Activated CD4-positive, alpha-beta T cell treated with anti-CD3 and anti-CD28 coated beads, Interleukin-2, amount 10 ng/mL, durations not matched to agents 24 days and 14 days (primary cell): ENCODE measurements at regions of chr1 and their contacts with region 1.

Region 1: GRCh38 chr1:236759252-236759859 is 35.7 kb upstream of the MTR start:
- DNase-seq: peak; percentile 74
- H3K4me3 Mint-ChIP-seq: no peak overlapping the region
- H3K27ac Mint-ChIP-seq: no peak overlapping the region
- H3K4me1 Mint-ChIP-seq: peaks cover 6% of the 10 kb centered on the region
- H3K27me3 Mint-ChIP-seq: peaks cover 3% of the 10 kb centered on the region

Region 2: GRCh38 chr1:236868625-236869467 is 109.5 kb after region 1 on chr1:
- intact Hi-C with region 1: loop called (anchors 1 kb)
- DNase-seq: peak; percentile 83
- H3K4me3 Mint-ChIP-seq: no peak overlapping the region
- H3K27ac Mint-ChIP-seq: no peak overlapping the region
- H3K4me1 Mint-ChIP-seq: peaks cover 10% of the 10 kb centered on the region
- H3K27me3 Mint-ChIP-seq: no peaks in the 10 kb centered on the region

Region 3: GRCh38 chr1:237124856-237125462 is 365.6 kb after region 1 on chr1:
- intact Hi-C with region 1: loop called (anchors 5 kb)
- DNase-seq: no peak
- H3K4me3 Mint-ChIP-seq: no peak overlapping the region
- H3K27ac Mint-ChIP-seq: no peak overlapping the region
- H3K4me1 Mint-ChIP-seq: no peaks in the 10 kb centered on the region
- H3K27me3 Mint-ChIP-seq: no peaks in the 10 kb centered on the region

Region 4: GRCh38 chr1:237386362-237387143 is 627.2 kb after region 1 on chr1:
- intact Hi-C with region 1: loop called (anchors 5 kb)
- DNase-seq: no peak
- H3K4me3 Mint-ChIP-seq: no peak overlapping the region
- H3K27ac Mint-ChIP-seq: no peak overlapping the region
- H3K4me1 Mint-ChIP-seq: no peaks in the 10 kb centered on the region
- H3K27me3 Mint-ChIP-seq: peaks cover 3% of the 10 kb centered on the region

Region 5: DNA sequence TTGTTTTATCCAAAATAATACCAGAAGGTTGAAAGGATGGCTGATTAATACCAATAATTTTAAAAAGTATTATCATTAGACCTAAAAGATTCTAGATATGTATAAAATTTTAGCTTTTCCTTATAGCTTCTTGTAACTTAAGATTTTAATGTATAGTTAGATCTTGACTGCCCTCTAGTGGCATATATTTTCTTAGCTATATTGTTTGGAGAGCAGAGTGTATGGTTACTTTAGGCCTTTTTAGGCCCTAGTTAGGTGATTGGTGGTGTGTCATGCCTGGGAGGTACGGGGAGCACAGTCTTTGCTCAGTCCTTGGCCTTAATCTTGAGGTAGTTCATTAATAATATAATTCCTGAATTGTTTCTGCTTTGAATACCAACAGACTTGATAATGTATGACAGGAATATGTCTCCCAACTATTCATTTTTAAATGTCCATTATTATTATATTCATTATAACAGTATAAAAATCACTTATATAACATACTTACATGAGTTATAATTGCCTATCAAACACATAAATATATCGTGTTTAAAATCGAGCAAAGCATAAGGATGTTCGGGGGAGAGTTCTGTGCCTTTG is 803.0 kb after region 1 on chr1:
- intact Hi-C with region 1: loop called (anchors 5 kb)
- DNase-seq: peak; percentile 63
- H3K4me3 Mint-ChIP-seq: no peak overlapping the region
- H3K27ac Mint-ChIP-seq: no peak overlapping the region
- H3K4me1 Mint-ChIP-seq: no peaks in the 10 kb centered on the region
- H3K27me3 Mint-ChIP-seq: peaks cover 7% of the 10 kb centered on the region